Transverse colon (tissue), 4 donors: ENCODE measurements at regions of chr1 and their contacts with region 1.

Region 1: GRCh38 chr1:159250638-159251216 is 46.1 kb downstream of the ACKR1 start:
- DNase-seq: no peak
- H3K4me3 ChIP-seq: no peak overlapping the region
- H3K27ac ChIP-seq: no peak overlapping the region
- H3K4me1 ChIP-seq: no peaks in the 10 kb centered on the region
- H3K27me3 ChIP-seq: no peaks in the 10 kb centered on the region
- CTCF ChIP-seq: no peak
- EP300 ChIP-seq: no peak
- POLR2A ChIP-seq: no peak

Region 2: DNA sequence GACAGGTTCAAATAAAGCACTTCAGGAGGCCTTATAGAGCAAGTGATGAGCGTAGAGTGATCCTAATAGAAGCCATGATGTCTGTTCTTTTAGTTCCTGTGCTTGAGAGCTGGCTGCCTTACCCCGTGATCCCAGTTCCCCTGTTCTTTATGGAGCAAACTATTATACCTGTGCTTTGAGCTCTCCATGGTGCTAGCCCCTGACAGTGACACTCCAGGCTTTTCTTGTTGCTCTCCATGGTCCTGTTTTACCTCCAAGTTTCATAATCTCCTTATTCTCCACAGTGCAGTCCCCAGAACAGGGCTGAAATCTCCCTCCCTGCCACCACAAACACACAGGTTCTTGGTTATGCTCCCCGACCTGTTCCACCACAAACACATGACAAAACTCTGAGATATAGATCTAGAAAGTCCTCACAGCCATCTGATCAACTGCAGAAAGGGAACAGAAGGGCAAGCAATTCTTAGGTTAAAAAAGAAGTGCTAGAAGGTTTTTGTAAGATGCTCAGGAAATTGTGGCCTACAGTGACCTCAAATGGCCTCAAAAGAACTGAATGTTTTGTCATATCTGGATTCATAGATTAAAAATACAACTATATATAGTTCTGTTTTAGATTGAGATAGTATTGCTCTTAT is 73.3 kb before region 1 on chr1:
- in situ Hi-C with region 1: no loop called
- intact Hi-C with region 1: loop called (anchors 2 kb)
- DNase-seq: peak; percentile 22
- H3K4me3 ChIP-seq: no peak overlapping the region
- H3K27ac ChIP-seq: no peak overlapping the region
- H3K4me1 ChIP-seq: peaks cover 0 to 4% (median 0%) of the 10 kb centered on the region in 4 donors
- H3K27me3 ChIP-seq: peaks cover 13% of the 10 kb centered on the region
- CTCF ChIP-seq: no peak
- EP300 ChIP-seq: no peak
- POLR2A ChIP-seq: no peak

Region 3: GRCh38 chr1:159339536-159339935 is 88.8 kb after region 1 on chr1:
- in situ Hi-C with region 1: no loop called
- intact Hi-C with region 1: no loop called
- DNase-seq: no peak
- H3K4me3 ChIP-seq: no peak overlapping the region
- H3K27ac ChIP-seq: no peak overlapping the region
- H3K4me1 ChIP-seq: no peaks in the 10 kb centered on the region
- H3K27me3 ChIP-seq: no peaks in the 10 kb centered on the region
- CTCF ChIP-seq: no peak
- EP300 ChIP-seq: no peak
- POLR2A ChIP-seq: no peak